Endothelial cell of umbilical vein (primary cell): ENCODE measurements at regions of chr13 and their contacts with region 1.

Region 1: GRCh38 chr13:39783050-39783449 is 127.6 kb downstream of the COG6 start:
- DNase-seq: peak; percentile 80
- H3K4me3 ChIP-seq: no peak overlapping the region
- H3K27ac ChIP-seq: no peak overlapping the region
- H3K4me1 ChIP-seq: peaks cover 62% of the 10 kb centered on the region
- H3K27me3 ChIP-seq: no peaks in the 10 kb centered on the region
- CTCF ChIP-seq: no peak
- POLR2A ChIP-seq: no peak

Region 2: DNA sequence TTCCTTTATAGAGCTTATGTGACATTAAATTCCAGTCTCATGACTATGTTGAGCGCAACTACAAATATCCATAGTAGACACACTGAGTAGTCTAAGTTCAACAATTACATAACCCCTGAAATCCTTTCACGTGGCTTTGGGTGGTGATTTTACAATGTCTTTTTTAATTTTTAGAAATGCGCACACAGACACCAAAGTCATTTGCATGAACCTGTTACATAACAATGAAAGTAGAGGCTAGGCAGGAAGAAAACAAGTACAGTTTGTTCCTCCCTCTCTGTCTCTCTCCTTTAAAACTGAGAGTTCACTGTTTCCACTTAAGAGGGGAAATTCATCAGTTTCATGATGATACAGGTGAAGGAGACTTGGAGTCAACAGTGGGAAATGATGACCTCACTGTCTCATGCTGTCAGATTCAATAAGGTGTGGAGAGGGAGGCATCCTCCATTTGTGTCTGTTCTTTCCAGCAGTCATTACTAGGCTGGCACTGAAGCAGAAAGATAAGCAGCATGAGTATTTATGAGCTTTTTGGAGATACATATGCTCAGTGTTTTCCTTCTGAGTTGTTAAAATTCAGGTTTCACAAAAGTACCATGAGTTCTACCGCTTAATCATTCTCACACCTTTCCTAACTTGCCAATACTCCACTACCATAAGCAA is 381.9 kb before region 1 on chr13:
- CTCF ChIA-PET with region 1: no interaction called
- POLR2A ChIA-PET with region 1: no interaction called
- dilution Hi-C with region 1: no loop called
- intact Hi-C with region 1: no loop called
- DNase-seq: no peak
- H3K4me3 ChIP-seq: no peak overlapping the region
- H3K27ac ChIP-seq: no peak overlapping the region
- H3K4me1 ChIP-seq: no peaks in the 10 kb centered on the region
- H3K27me3 ChIP-seq: no peaks in the 10 kb centered on the region
- CTCF ChIP-seq: no peak
- POLR2A ChIP-seq: no peak

Region 3: GRCh38 chr13:39616087-39616694 is 166.9 kb before region 1 on chr13:
- CTCF ChIA-PET with region 1: no interaction called
- POLR2A ChIA-PET with region 1: no interaction called
- dilution Hi-C with region 1: no loop called
- intact Hi-C with region 1: no loop called
- DNase-seq: peak; percentile 70
- H3K4me3 ChIP-seq: no peak overlapping the region
- H3K27ac ChIP-seq: no peak overlapping the region
- H3K4me1 ChIP-seq: no peaks in the 10 kb centered on the region
- H3K27me3 ChIP-seq: peaks cover 5 to 7% of the 10 kb centered on the region in 2 experiments
- CTCF ChIP-seq: peak; percentile 83 to 85
- POLR2A ChIP-seq: no peak

Region 4: GRCh38 chr13:39748961-39749360 is 34.1 kb before region 1 on chr13:
- CTCF ChIA-PET with region 1: no interaction called
- POLR2A ChIA-PET with region 1: no interaction called
- dilution Hi-C with region 1: no loop called
- intact Hi-C with region 1: no loop called
- DNase-seq: no peak
- H3K4me3 ChIP-seq: no peak overlapping the region
- H3K27ac ChIP-seq: no peak overlapping the region
- H3K4me1 ChIP-seq: peaks cover 9% of the 10 kb centered on the region
- H3K27me3 ChIP-seq: no peaks in the 10 kb centered on the region
- CTCF ChIP-seq: no peak
- POLR2A ChIP-seq: no peak

Region 5: GRCh38 chr13:39876258-39876657 is 93.2 kb after region 1 on chr13:
- CTCF ChIA-PET with region 1: interaction called, 4 read pairs
- POLR2A ChIA-PET with region 1: no interaction called
- dilution Hi-C with region 1: no loop called
- intact Hi-C with region 1: loop called (anchors 1 kb)
- DNase-seq: peak; percentile 90
- H3K4me3 ChIP-seq: no peak overlapping the region
- H3K27ac ChIP-seq: peak overlapping the region; percentile 98
- H3K4me1 ChIP-seq: peaks cover 67% of the 10 kb centered on the region
- H3K27me3 ChIP-seq: no peaks in the 10 kb centered on the region
- CTCF ChIP-seq: no peak
- POLR2A ChIP-seq: peak; percentile 25

Region 6: DNA sequence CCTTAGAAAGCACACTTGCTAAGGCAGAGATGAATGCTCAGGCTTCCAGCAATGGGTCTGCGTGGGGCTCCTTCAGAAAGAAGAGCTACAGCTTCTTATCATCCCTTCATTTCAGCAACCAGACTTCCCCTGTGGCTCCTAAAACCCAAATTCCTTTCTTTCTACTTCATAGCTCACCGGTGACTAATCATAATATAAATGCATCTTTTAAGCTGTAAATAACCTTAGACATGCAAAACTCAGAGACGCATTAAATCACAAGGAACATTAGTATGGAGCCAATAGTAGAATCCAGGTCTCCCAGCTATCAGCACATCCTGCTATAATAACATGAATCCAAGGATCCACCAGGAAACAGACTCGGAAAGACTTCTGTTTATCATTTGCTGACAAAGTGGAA is 248.0 kb after region 1 on chr13:
- CTCF ChIA-PET with region 1: interaction called, 4 read pairs
- POLR2A ChIA-PET with region 1: no interaction called
- dilution Hi-C with region 1: no loop called
- intact Hi-C with region 1: loop called (anchors 1 kb)
- DNase-seq: peak; percentile 84
- H3K4me3 ChIP-seq: no peak overlapping the region
- H3K27ac ChIP-seq: peak overlapping the region; percentile 95
- H3K4me1 ChIP-seq: peaks cover 19% of the 10 kb centered on the region
- H3K27me3 ChIP-seq: no peaks in the 10 kb centered on the region
- CTCF ChIP-seq: no peak
- POLR2A ChIP-seq: no peak

Region 7: GRCh38 chr13:40082639-40083038 is 299.6 kb after region 1 on chr13:
- CTCF ChIA-PET with region 1: interaction called, 3 read pairs
- POLR2A ChIA-PET with region 1: no interaction called
- dilution Hi-C with region 1: no loop called
- intact Hi-C with region 1: loop called (anchors 1 kb)
- DNase-seq: peak; percentile 99
- H3K4me3 ChIP-seq: no peak overlapping the region
- H3K27ac ChIP-seq: peak overlapping the region; percentile 71
- H3K4me1 ChIP-seq: peaks cover 11% of the 10 kb centered on the region
- H3K27me3 ChIP-seq: no peaks in the 10 kb centered on the region
- CTCF ChIP-seq: peak; percentile 30 to 62
- POLR2A ChIP-seq: no peak